ENCODE measurements at regions of chr17 and their contacts with region 1.

Region 1: DNA sequence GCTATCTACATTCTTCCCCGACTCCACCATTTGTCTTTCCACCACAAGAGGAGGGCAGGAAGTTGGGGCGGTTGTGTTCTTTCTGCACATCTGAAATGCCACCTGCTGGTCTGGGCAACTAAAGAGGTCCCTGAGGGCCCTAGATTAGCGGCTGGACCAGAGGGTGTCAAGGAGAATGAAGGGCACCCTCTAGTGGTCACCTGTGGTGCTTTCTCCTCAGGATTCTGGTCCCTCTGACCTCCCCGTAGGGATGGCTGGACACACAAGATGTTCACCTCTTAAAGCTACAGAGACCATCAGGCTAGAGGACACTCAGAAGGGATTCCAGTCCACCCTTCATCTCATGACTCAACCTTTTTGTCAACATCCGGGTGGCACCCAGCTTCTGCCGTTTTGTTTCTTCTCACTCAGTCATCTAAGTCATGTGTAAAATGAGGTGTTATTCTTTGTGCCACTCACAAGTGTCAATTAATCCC is 2.9 kb upstream of the SCIMP start:
- DNase-seq: peak in 7 of 9 experiments; percentile 31 to 77 (median 45)
- ATAC-seq: peak; percentile 44
- H3K4me3 ChIP-seq: no peak overlapping the region
- H3K4me3 Mint-ChIP-seq: no peak overlapping the region
- H3K27ac ChIP-seq: peak overlapping the region; percentile 1 to 78
- H3K27ac Mint-ChIP-seq: peak overlapping the region; percentile 74
- H3K4me1 ChIP-seq: peaks cover 32% of the 10 kb centered on the region
- H3K4me1 Mint-ChIP-seq: peaks cover 53% of the 10 kb centered on the region
- H3K27me3 ChIP-seq: no peaks in the 10 kb centered on the region
- H3K27me3 Mint-ChIP-seq: no peaks in the 10 kb centered on the region
- CTCF ChIP-seq: peak; percentile 35

Region 2: GRCh38 chr17:5198472-5198871 is 39.1 kb before region 1 on chr17:
- CTCF ChIA-PET with region 1: interaction called, 15 read pairs
- POLR2A ChIA-PET with region 1: interaction called, 4 read pairs
- intact Hi-C with region 1: loop called in 1 of 2 experiments (anchors 1 kb)
- DNase-seq: peak in 3 of 9 experiments; percentile 22 to 57 (median 43)
- ATAC-seq: peak; percentile 30
- H3K4me3 ChIP-seq: no peak overlapping the region
- H3K4me3 Mint-ChIP-seq: no peak overlapping the region
- H3K27ac ChIP-seq: peak overlapping the region in 1 of 2 experiments; percentile 50
- H3K27ac Mint-ChIP-seq: peak overlapping the region; percentile 79
- H3K4me1 ChIP-seq: peaks cover 6% of the 10 kb centered on the region
- H3K4me1 Mint-ChIP-seq: peaks cover 17% of the 10 kb centered on the region
- H3K27me3 ChIP-seq: no peaks in the 10 kb centered on the region
- H3K27me3 Mint-ChIP-seq: no peaks in the 10 kb centered on the region
- CTCF ChIP-seq: no peak

Region 3: GRCh38 chr17:5226940-5227878 is 10.4 kb before region 1 on chr17:
- CTCF ChIA-PET with region 1: interaction called, 5 read pairs
- POLR2A ChIA-PET with region 1: interaction called, 22 read pairs
- intact Hi-C with region 1: no loop called
- DNase-seq: peak in 8 of 9 experiments; percentile 28 to 80 (median 60)
- ATAC-seq: peak; percentile 91
- H3K4me3 ChIP-seq: peak overlapping the region; percentile 16 to 36
- H3K4me3 Mint-ChIP-seq: peak overlapping the region; percentile 73
- H3K27ac ChIP-seq: peak overlapping the region; percentile 47 to 93
- H3K27ac Mint-ChIP-seq: peak overlapping the region; percentile 95
- H3K4me1 ChIP-seq: peaks cover 46% of the 10 kb centered on the region
- H3K4me1 Mint-ChIP-seq: peaks cover 53% of the 10 kb centered on the region
- H3K27me3 ChIP-seq: no peaks in the 10 kb centered on the region
- H3K27me3 Mint-ChIP-seq: no peaks in the 10 kb centered on the region
- CTCF ChIP-seq: no peak

Region 4: GRCh38 chr17:5281814-5282653 is 44.5 kb after region 1 on chr17 and contains the start of gene RABEP1:
- CTCF ChIA-PET with region 1: no interaction called
- POLR2A ChIA-PET with region 1: no interaction called
- intact Hi-C with region 1: loop called in 1 of 2 experiments (anchors 1 kb)
- DNase-seq: peak; percentile 85 to 97 (median 95)
- ATAC-seq: peak; percentile 81
- H3K4me3 ChIP-seq: peak within 1 kb of the TSS; percentile 61 to 63
- H3K4me3 Mint-ChIP-seq: peak within 1 kb of the TSS; percentile 93
- H3K27ac ChIP-seq: peak within 1 kb of the TSS; percentile 60 to 61
- H3K27ac Mint-ChIP-seq: peak within 1 kb of the TSS; percentile 93
- H3K4me1 ChIP-seq: peaks cover 41% of the 10 kb centered on the region
- H3K4me1 Mint-ChIP-seq: peaks cover 38% of the 10 kb centered on the region
- H3K27me3 ChIP-seq: no peaks in the 10 kb centered on the region
- H3K27me3 Mint-ChIP-seq: no peaks in the 10 kb centered on the region
- CTCF ChIP-seq: no peak
- total RNA-seq, gene RABEP1: 27.1 to 27.6 TPM

Region 5: GRCh38 chr17:5297245-5297644 is 59.7 kb after region 1 on chr17:
- CTCF ChIA-PET with region 1: no interaction called
- POLR2A ChIA-PET with region 1: no interaction called
- intact Hi-C with region 1: no loop called
- DNase-seq: no peak
- ATAC-seq: no peak
- H3K4me3 ChIP-seq: no peak overlapping the region
- H3K4me3 Mint-ChIP-seq: no peak overlapping the region
- H3K27ac ChIP-seq: no peak overlapping the region
- H3K27ac Mint-ChIP-seq: no peak overlapping the region
- H3K4me1 ChIP-seq: no peaks in the 10 kb centered on the region
- H3K4me1 Mint-ChIP-seq: peaks cover 49% of the 10 kb centered on the region
- H3K27me3 ChIP-seq: no peaks in the 10 kb centered on the region
- H3K27me3 Mint-ChIP-seq: no peaks in the 10 kb centered on the region
- CTCF ChIP-seq: no peak